ENCODE measurements at regions of chr6 and their contacts with region 1.

Region 1: DNA sequence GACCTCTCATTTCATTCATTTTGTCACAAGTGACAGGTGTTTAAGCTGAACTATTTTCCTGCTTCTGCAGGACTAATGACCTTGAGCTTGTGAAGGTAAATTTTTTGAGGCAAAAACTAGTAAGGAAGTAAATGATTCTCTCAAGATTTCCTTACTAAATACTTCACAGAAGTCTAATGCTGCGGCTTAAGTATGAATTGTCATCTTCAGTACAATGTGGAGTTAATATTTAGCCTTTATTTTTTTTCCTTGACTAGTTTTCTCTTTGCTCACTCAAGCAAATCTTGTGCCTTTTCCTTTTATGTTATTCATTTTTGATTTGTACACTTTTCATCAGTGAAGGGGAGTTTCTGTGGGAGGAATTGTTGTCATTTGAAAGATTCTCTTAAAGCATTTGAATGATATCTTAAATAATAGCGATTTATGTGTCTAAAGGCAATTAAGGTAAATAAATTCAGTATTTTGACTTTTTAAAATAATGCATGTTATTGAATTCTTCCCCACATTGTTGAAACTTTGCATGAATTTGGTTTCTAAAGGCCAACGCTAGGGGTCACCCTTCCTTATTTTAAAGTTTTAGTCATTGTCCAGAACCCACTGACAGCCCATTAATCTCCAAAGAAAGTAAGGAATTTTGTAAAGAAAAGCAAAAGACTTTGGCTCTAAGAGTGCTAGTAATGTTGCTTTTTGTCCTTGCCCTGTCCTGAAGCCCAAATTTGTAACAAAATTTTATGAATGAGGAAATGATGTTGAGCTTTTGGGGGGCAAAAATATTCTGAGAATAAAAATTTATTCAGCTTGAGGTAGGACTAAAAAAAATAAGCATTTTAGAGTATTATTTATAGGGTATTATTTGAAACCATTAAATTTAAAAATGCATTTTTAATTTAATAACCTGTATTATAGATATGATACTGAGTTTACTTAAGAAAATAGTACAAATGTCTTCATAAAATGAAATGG is 157.4 kb upstream of the LAMA2 start:
- DNase-seq: peak in 1 of 5 donors; percentile 12
- ATAC-seq: no peak
- H3K4me3 ChIP-seq: no peak overlapping the region
- H3K27ac ChIP-seq: no peak overlapping the region
- H3K4me1 ChIP-seq: peaks cover 0 to 6% (median 0%) of the 10 kb centered on the region in 12 donors
- H3K27me3 ChIP-seq: no peaks in the 10 kb centered on the region
- CTCF ChIP-seq: peak; percentile 43 to 77 (median 62)
- POLR2A ChIP-seq: no peak

Region 2: DNA sequence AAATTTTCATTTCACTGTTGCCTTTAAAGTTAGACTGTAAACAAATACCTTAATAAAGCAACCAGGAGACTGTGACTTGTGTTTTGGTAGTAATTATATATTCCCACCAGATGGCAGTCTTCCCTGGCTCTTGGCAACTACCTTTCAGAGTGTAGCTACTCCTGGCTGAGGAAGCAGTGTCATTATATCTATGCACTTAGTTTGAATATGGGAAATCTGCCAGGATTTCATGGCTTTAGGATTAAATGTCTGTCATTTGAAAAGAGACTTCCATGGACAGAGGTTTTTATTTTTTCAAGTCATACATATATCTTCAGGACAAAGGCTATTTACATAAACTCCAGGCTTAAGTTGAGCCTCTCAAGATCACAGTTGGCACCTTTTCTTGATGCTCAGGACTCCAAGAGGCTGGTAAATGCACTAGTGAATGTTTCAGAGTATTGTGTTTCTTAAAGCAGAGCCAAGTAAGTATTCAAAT is 988.5 kb before region 1 on chr6:
- intact Hi-C with region 1: loop called in 8 of 10 experiments (anchors 2 to 10 kb)
- DNase-seq: peak in 2 of 5 donors; percentile 26 to 35
- ATAC-seq: peak; percentile 64 to 76 (median 72)
- H3K4me3 ChIP-seq: no peak overlapping the region
- H3K27ac ChIP-seq: no peak overlapping the region
- H3K4me1 ChIP-seq: peaks cover 0 to 3% (median 0%) of the 10 kb centered on the region in 12 donors
- H3K27me3 ChIP-seq: peaks cover 0 to 8% (median 0%) of the 10 kb centered on the region in 9 donors
- CTCF ChIP-seq: peak; percentile 45 to 77 (median 65)
- POLR2A ChIP-seq: no peak

Region 3: GRCh38 chr6:127855542-127856159 is 869.9 kb before region 1 on chr6:
- intact Hi-C with region 1: loop called in 2 of 10 experiments (anchors 10 kb)
- DNase-seq: no peak
- ATAC-seq: no peak
- H3K4me3 ChIP-seq: no peak overlapping the region
- H3K27ac ChIP-seq: no peak overlapping the region
- H3K4me1 ChIP-seq: no peaks in the 10 kb centered on the region
- H3K27me3 ChIP-seq: no peaks in the 10 kb centered on the region
- CTCF ChIP-seq: peak in 10 of 12 donors; percentile 30 to 60 (median 42)
- POLR2A ChIP-seq: no peak

Region 4: GRCh38 chr6:128068116-128068479 is 657.5 kb before region 1 on chr6:
- intact Hi-C with region 1: loop called in 1 of 10 experiments (anchors 10 kb)
- DNase-seq: peak in 4 of 5 donors; percentile 30 to 73 (median 56)
- ATAC-seq: peak; percentile 97 to 98 (median 98)
- H3K4me3 ChIP-seq: no peak overlapping the region
- H3K27ac ChIP-seq: peak overlapping the region in 8 of 12 donors; percentile 1 to 50 (median 39)
- H3K4me1 ChIP-seq: peaks cover 0 to 33% (median 1%) of the 10 kb centered on the region in 12 donors
- H3K27me3 ChIP-seq: no peaks in the 10 kb centered on the region
- CTCF ChIP-seq: peak in 7 of 12 donors; percentile 12 to 47 (median 30)
- POLR2A ChIP-seq: no peak

Region 5: DNA sequence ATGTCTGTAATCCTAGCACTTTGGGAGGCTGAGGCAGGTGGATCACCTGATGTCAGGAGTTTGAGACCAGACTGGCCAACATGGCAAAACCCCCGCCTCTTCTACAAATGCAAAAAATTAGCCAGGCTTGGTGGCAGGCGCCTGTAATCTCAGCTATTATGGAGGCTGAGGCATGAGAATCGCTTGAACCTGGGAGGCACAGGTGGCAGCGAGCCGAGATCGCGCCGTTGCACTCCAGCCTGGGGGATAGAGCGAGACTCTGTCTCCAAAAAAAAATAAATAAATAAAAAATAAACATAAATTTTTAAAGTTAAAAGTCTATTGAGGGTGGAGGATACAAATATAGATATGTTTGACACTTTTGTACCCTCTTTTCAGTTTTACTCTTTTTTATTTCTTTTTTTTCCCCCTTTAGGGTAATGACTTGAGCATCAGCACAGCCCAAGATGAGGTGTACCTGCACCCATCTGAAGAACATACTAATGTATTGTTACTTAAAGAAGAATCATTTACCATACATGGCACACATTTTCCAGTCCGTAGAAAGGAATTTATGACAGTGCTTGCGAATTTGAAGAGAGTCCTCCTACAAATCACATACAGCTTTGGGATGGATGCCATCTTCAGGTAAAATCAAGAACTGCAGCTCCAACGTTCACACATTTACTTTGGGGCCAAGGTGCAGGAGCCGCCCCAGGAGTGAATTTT is 526.3 kb after region 1 on chr6:
- intact Hi-C with region 1: loop called in 5 of 10 experiments (anchors 5 to 10 kb)
- DNase-seq: peak in 1 of 5 donors; percentile 37
- ATAC-seq: peak in 3 of 4 donors; percentile 30 to 34 (median 33)
- H3K4me3 ChIP-seq: no peak overlapping the region
- H3K27ac ChIP-seq: peak overlapping the region in 2 of 12 donors; percentile 41 to 42
- H3K4me1 ChIP-seq: peaks cover 0 to 39% (median 20%) of the 10 kb centered on the region in 12 donors
- H3K27me3 ChIP-seq: no peaks in the 10 kb centered on the region
- CTCF ChIP-seq: peak; percentile 56 to 82 (median 74)
- POLR2A ChIP-seq: no peak

Region 6: GRCh38 chr6:129359811-129360681 is 634.5 kb after region 1 on chr6:
- intact Hi-C with region 1: loop called in 1 of 10 experiments (anchors 10 kb)
- DNase-seq: no peak
- ATAC-seq: no peak
- H3K4me3 ChIP-seq: no peak overlapping the region
- H3K27ac ChIP-seq: no peak overlapping the region
- H3K4me1 ChIP-seq: peaks cover 0 to 27% (median 10%) of the 10 kb centered on the region in 12 donors
- H3K27me3 ChIP-seq: no peaks in the 10 kb centered on the region
- CTCF ChIP-seq: no peak
- POLR2A ChIP-seq: no peak

Region 7: GRCh38 chr6:129370268-129370916 is 644.8 kb after region 1 on chr6:
- intact Hi-C with region 1: loop called in 3 of 10 experiments (anchors 10 kb)
- DNase-seq: peak in 1 of 5 donors; percentile 20
- ATAC-seq: no peak
- H3K4me3 ChIP-seq: peak overlapping the region in 3 of 12 donors; percentile 1 to 30 (median 13)
- H3K27ac ChIP-seq: peak overlapping the region in 11 of 12 donors; percentile 19 to 81 (median 59)
- H3K4me1 ChIP-seq: peaks cover 0 to 28% (median 6%) of the 10 kb centered on the region in 12 donors
- H3K27me3 ChIP-seq: no peaks in the 10 kb centered on the region
- CTCF ChIP-seq: peak; percentile 53 to 73 (median 66)
- POLR2A ChIP-seq: no peak